ENCODE measurements at regions of chr11 and their contacts with region 1.

Region 1: DNA sequence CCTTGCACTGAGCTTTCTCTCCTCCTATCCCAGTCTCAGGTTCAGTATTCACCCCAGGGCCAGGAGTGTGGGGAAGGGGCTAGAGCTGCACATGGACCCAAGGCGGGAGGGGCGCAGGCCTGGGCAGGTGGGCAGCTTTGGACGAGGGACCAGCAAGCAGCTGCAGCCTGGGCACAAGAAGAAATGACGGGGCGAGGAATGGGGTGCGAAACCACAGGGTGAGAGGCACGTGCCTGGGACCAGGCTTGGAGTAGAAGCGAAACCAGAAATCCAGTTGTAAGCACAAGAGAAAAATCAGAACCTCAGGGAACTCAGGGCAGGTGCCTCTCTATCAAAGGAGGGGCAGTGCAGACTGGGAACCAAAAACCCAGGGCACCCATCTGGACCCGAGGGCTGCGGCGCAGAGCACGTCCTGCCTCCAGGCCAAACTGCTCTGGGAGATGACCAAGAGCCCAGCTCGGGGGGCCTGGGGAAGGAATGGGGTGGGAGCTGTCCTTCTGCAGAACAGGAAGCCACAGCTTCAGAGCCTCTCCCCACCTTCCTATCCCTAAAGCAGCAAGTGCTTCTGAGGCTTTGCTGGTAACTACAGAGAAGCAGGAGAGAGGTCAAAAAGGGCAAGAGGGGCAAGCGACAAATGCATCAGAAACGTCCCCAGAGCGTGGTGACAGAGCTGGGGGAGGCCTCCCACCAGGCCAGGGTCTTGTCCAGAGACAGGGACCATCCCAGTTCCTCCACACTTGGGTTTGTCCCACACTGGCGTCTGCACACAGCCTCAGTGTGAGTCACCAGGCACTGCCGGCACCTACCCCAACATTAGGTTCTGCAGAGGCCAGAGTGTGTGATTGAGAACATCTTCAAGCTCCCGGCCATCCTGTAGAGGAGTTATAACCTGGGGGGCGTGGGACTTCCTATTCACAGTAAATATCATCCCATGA is 18.3 kb upstream of the TMPRSS4 start:
- DNase-seq: no peak
- ATAC-seq: no peak
- H3K4me3 ChIP-seq: no peak overlapping the region
- H3K27ac ChIP-seq: no peak overlapping the region
- H3K4me1 ChIP-seq: no peaks in the 10 kb centered on the region
- H3K27me3 ChIP-seq: no peaks in the 10 kb centered on the region
- CTCF ChIP-seq: no peak
- POLR2A ChIP-seq: no peak

Region 2: GRCh38 chr11:117713538-117713991 is 345.0 kb before region 1 on chr11:
- intact Hi-C with region 1: no loop called
- DNase-seq: no peak
- ATAC-seq: no peak
- H3K4me3 ChIP-seq: no peak overlapping the region
- H3K27ac ChIP-seq: no peak overlapping the region
- H3K4me1 ChIP-seq: peaks cover 24% of the 10 kb centered on the region
- H3K27me3 ChIP-seq: no peaks in the 10 kb centered on the region
- CTCF ChIP-seq: no peak
- POLR2A ChIP-seq: no peak

Region 3: GRCh38 chr11:117807482-117808327 is 250.9 kb before region 1 on chr11:
- intact Hi-C with region 1: loop called (anchors 5 kb)
- DNase-seq: peak; percentile 80 to 91 (median 82)
- ATAC-seq: peak; percentile 63
- H3K4me3 ChIP-seq: no peak overlapping the region
- H3K27ac ChIP-seq: no peak overlapping the region
- H3K4me1 ChIP-seq: no peaks in the 10 kb centered on the region
- H3K27me3 ChIP-seq: no peaks in the 10 kb centered on the region
- CTCF ChIP-seq: peak; percentile 79 to 88 (median 83)
- POLR2A ChIP-seq: no peak

Region 4: GRCh38 chr11:118263695-118264567 is 205.4 kb after region 1 on chr11 and contains the start of gene MPZL2:
- intact Hi-C with region 1: no loop called
- DNase-seq: peak; percentile 76 to 87 (median 86)
- ATAC-seq: peak; percentile 93
- H3K4me3 ChIP-seq: peak within 1 kb of the TSS; percentile 9 to 11
- H3K27ac ChIP-seq: peak within 1 kb of the TSS; percentile 78 to 91 (median 85)
- H3K4me1 ChIP-seq: peaks cover 32% of the 10 kb centered on the region
- H3K27me3 ChIP-seq: no peaks in the 10 kb centered on the region
- CTCF ChIP-seq: peak in 4 of 7 experiments; percentile 8 to 22 (median 16)
- POLR2A ChIP-seq: peak; percentile 53 to 86 (median 86)
- total RNA-seq, gene MPZL2: 19.7 to 48.5 TPM

Region 5: DNA sequence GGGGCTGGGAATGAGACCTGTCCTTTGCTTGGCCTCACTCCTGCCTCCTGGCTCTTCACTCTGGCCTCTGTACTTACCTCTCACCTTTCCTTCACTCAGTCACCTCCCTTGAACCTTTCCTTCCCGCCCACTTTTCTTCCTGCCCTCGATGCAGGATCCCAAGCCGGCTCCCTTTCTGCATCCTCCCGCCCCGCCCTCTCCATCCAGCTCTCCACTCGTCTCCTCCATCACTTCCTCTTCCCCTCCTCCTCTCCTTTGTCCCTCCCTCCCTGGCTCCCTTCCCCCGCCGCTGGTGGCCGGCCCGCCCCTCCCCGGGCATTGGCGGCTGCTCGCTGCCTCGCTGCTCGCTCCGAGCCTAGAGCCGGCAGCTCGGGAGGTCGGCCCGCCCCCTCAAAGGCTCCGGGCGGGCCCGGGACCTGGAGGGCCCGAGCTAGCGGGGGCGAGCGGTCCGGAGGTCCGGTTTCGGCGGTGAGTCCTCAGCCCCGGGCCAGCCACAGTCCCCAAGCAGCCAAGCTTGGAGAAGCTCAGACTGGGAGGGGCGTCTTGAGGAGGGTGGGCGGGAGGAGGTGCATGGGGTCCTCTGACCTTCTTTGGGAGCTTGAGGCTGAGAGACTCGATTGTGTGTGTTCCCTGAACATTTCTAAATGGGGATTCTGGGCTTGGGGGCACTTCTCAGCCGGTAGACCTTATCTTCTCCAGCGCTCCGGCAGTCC is 562.6 kb after region 1 on chr11:
- intact Hi-C with region 1: no loop called
- DNase-seq: peak; percentile 69 to 79 (median 74)
- ATAC-seq: peak; percentile 72
- H3K4me3 ChIP-seq: no peak overlapping the region
- H3K27ac ChIP-seq: peak overlapping the region; percentile 21 to 76 (median 48)
- H3K4me1 ChIP-seq: peaks cover 50% of the 10 kb centered on the region
- H3K27me3 ChIP-seq: no peaks in the 10 kb centered on the region
- CTCF ChIP-seq: no peak
- POLR2A ChIP-seq: no peak

Measured in body of pancreas (tissue), 4 donors.